GM10248 (cell line): ENCODE measurements at regions of chr17 and their contacts with region 1.

Region 1: GRCh38 chr17:27601069-27601975 is 29.7 kb upstream of the LGALS9 start:
- DNase-seq: peak; percentile 71
- CTCF ChIP-seq: peak; percentile 89

Region 2: GRCh38 chr17:27353461-27354050 is 247.8 kb before region 1 on chr17:
- CTCF ChIA-PET with region 1: interaction called, 111 read pairs
- POLR2A ChIA-PET with region 1: no interaction called
- DNase-seq: peak; percentile 97
- CTCF ChIP-seq: peak; percentile 92

Region 3: GRCh38 chr17:27407916-27408846 is 193.1 kb before region 1 on chr17:
- CTCF ChIA-PET with region 1: interaction called, 12 read pairs
- POLR2A ChIA-PET with region 1: no interaction called
- DNase-seq: no peak
- CTCF ChIP-seq: no peak

Region 4: DNA sequence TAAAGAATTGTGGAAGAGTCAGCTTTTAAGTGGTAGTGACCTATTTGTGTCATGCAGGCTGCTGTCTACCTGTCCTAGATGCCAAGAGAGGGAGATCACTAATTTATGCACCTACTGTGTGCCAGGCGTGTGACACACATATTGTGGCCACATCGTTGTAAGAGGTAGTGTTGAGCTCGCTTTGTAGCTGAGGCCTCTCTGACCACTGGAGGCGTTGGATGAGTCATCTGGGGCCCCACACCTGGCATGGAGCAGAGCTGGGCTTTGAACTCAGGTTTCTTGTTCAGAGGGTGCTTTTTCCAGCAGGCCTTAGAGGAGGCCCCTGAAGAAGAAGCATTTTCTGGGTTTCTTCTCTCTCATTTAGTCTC is 22.6 kb before region 1 on chr17:
- CTCF ChIA-PET with region 1: interaction called, 125 read pairs
- POLR2A ChIA-PET with region 1: no interaction called
- DNase-seq: peak; percentile 82
- CTCF ChIP-seq: no peak

Region 5: DNA sequence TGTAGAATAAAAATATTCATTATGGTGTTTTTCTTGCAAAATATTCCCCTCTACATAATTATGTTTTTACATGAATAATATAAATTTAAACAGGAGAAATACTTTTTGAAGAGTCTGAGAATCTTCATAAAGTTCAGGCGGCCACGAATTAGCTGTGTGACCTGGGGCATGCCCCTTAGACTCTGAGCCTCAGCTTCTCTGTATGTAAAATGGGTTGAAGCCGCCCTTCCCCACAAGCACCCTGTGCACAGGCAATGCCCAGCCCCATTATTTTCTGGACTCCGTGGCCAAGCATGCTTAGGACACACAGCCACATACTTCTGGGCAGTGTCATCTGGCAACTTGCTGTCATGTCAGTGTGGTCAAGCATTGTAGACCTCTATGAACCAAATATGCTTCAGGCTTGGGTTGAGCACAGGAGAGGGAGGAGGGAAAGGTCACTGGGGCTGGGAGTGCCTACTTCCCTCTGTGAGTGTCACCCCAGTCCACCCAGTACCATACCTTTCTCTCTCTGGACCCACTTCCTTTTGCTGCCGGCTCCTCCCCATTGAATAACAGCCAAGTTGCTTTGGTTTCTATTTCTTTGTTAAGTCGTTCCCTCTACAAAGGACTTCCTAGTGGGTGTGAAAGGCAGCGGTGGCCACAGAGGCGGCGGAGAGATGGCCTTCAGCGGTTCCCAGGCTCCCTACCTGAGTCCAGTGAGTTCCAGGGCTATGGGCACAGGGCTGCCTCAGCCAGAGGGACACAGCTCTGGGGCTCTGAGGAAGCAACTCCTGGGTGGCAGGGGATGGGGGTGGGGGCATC is 29.5 kb after region 1 on chr17 and contains the start of gene LGALS9:
- CTCF ChIA-PET with region 1: interaction called, 75 read pairs
- POLR2A ChIA-PET with region 1: no interaction called
- DNase-seq: peak; percentile 70
- CTCF ChIP-seq: no peak